ENCODE measurements at regions of chr6 and their contacts with region 1.

Region 1: DNA sequence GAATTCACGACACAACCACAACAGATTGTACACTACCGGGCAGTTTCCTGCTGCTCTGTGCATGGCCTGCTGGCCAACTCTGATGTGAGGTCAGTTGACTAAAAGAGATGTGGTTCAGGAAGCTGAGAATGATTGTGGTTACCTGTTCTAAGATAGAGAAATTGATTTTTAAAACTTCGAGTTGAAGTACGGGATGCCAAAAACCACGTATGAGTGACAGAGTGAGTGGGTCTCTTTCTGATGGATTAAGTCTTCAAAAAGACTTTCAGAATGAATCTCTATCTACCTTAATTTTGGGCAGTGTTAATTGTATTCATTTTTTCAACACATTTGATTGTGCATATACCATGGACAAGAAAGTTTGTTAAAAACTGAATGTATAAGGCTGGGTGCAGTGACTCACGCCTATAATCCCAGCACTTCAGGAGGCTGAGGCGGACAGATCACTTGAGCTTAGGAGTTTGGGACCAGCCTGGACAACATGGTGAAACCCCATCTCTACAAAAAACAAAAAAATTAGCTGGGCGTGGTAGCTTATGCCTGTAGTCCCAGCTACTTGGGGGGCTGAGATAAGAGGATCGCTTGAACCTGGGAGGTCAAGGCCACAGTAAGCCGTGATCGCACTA is 121.2 kb downstream of the SGK1 start:
- DNase-seq: no peak
- ATAC-seq: no peak
- H3K4me3 ChIP-seq: no peak overlapping the region
- H3K27ac ChIP-seq: peak overlapping the region; percentile 83
- H3K4me1 ChIP-seq: peaks cover 94% of the 10 kb centered on the region
- H3K27me3 ChIP-seq: no peaks in the 10 kb centered on the region
- CTCF ChIP-seq: no peak
- EP300 ChIP-seq: no peak
- POLR2A ChIP-seq: no peak
- RAD21 ChIP-seq: no peak

Region 2: DNA sequence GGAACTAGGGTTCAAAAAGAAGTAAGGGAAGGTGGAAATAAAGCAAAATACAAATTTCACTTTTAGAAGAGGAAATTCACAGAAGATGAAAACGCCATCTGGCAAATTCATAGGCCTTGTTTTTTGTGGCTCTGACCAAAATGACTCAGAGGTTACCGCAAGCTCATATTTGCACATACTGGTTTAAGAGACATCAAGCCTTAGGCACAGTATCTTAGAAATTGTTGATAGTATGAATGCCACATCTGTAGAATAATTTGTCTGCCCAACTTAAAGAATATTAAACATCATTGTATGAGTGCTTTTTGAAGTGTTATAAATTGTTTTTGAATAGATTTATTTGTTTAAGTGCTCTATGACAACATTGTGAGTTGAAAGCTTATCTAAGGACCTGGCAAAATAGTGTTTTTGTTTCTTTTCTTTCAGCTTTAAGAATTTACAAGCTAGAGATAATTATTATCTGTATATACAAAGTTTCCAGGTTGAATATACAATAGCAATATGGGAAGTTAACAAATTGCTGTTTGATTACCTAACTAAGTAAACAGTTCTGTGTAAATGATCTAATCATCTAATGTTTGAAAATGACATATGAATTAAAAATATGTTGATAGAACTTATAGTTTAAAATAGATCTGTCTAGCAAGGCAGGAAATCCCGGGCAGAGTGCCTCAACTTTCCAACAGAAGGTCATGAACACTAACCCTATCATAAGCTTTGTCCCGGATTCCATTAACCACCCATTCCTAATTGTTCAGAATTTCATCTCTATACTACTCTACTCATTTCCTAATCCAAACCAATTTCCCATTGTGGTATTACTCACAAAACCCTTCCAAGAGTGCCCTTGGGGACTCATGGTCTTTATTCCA is 1548.1 kb before region 1 on chr6:
- CTCF ChIA-PET with region 1: no interaction called
- POLR2A ChIA-PET with region 1: no interaction called
- in situ Hi-C with region 1: no loop called
- intact Hi-C with region 1: no loop called
- DNase-seq: no peak
- ATAC-seq: no peak
- H3K4me3 ChIP-seq: no peak overlapping the region
- H3K27ac ChIP-seq: no peak overlapping the region
- H3K4me1 ChIP-seq: no peaks in the 10 kb centered on the region
- H3K27me3 ChIP-seq: 0 out of 5 replicates have a peak, but pooled peaks cover 0 to 4% of the 10 kb centered on the region in 2 experiments
- CTCF ChIP-seq: no peak
- EP300 ChIP-seq: no peak
- POLR2A ChIP-seq: no peak
- RAD21 ChIP-seq: no peak

Region 3: GRCh38 chr6:133952815-133953633 is 243.7 kb before region 1 on chr6 and contains the start of gene TBPL1:
- CTCF ChIA-PET with region 1: no interaction called
- POLR2A ChIA-PET with region 1: no interaction called
- in situ Hi-C with region 1: no loop called
- intact Hi-C with region 1: loop called (anchors 5 kb)
- DNase-seq: peak; percentile 91
- ATAC-seq: peak; percentile 97
- H3K4me3 ChIP-seq: peak within 1 kb of the TSS; percentile 79 to 89 (median 83)
- H3K27ac ChIP-seq: peak within 1 kb of the TSS; percentile 56
- H3K4me1 ChIP-seq: peaks cover 24% of the 10 kb centered on the region
- H3K27me3 ChIP-seq: no peaks in the 10 kb centered on the region; a peak in 1 of 5 replicates
- CTCF ChIP-seq: peak; percentile 16; the same call in 1 of the 2 replicates
- EP300 ChIP-seq: no peak
- POLR2A ChIP-seq: peak; percentile 86 to 88
- RAD21 ChIP-seq: peak; percentile 22; the same call in 1 of the 2 replicates
- total RNA-seq, gene TBPL1: 39.3 and 47.7 TPM in 2 replicates

Region 4: GRCh38 chr6:134002821-134003220 is 193.9 kb before region 1 on chr6:
- CTCF ChIA-PET with region 1: no interaction called
- POLR2A ChIA-PET with region 1: no interaction called
- in situ Hi-C with region 1: no loop called
- intact Hi-C with region 1: no loop called
- DNase-seq: no peak
- ATAC-seq: no peak
- H3K4me3 ChIP-seq: no peak overlapping the region
- H3K27ac ChIP-seq: no peak overlapping the region
- H3K4me1 ChIP-seq: no peaks in the 10 kb centered on the region
- H3K27me3 ChIP-seq: no peaks in the 10 kb centered on the region; a peak in 2 of 5 replicates
- CTCF ChIP-seq: no peak
- EP300 ChIP-seq: no peak
- POLR2A ChIP-seq: no peak
- RAD21 ChIP-seq: no peak

Region 5: DNA sequence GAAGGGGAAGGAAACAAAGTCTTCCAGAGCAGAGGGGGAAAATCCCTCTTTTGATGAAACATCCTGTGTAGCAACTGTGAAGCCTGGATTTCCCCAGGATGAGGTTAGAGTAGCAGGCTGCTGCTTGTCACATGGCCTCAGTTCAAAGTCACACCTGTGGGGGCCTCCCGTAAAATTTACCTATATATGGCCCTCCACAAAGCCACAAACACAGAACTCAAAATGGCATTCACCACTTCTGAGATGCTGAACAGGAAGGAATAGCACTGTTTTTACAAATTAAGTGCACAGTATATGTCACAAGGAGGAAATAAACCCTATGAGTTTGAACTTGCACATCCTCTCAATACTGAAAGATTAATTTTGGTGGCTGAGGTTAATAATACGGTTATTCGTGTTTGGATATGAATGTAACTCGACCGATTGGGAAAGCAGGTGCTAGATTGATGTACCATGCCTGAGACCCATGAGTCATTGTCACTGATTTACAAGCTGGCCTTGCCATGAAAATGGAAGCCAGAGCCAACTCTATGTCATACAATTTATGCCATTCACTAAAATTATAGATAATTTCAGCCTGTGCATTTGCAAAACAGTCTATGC is 50.7 kb after region 1 on chr6:
- CTCF ChIA-PET with region 1: no interaction called
- POLR2A ChIA-PET with region 1: interaction called, 62 read pairs
- in situ Hi-C with region 1: loop called (anchors 5 kb)
- intact Hi-C with region 1: loop called (anchors 1 kb)
- DNase-seq: no peak
- ATAC-seq: no peak
- H3K4me3 ChIP-seq: no peak overlapping the region
- H3K27ac ChIP-seq: no peak overlapping the region
- H3K4me1 ChIP-seq: peaks cover 59% of the 10 kb centered on the region
- H3K27me3 ChIP-seq: no peaks in the 10 kb centered on the region
- CTCF ChIP-seq: no peak
- EP300 ChIP-seq: 0 out of 4 replicates have a peak, but pooled peaks of 1 of the 2 experiments have one; percentile 32
- POLR2A ChIP-seq: no peak
- RAD21 ChIP-seq: no peak

Region 6: DNA sequence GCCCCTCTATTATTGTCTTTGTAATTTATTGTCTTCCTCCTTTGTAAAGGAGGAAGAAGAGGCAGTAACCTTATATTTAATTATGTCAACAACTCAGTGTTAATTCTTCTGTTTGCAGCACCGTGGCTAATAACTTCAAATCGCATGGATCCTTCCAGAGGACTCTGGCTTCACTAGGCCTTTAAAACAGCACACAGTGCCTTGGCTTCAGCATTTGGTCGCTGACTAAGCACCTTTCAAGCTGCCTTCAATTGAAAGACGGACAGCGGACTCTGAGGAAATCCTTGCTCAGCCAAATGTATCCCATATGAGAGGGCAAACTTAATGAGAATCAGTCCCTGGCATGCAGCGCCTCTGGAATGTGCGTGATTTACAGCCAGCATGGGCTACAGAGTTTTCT is 57.0 kb after region 1 on chr6:
- CTCF ChIA-PET with region 1: no interaction called
- POLR2A ChIA-PET with region 1: interaction called, 62 read pairs
- in situ Hi-C with region 1: loop called (anchors 5 kb)
- intact Hi-C with region 1: loop called (anchors 1 kb)
- DNase-seq: peak; percentile 41
- ATAC-seq: no peak
- H3K4me3 ChIP-seq: no peak overlapping the region
- H3K27ac ChIP-seq: peak overlapping the region; percentile 39
- H3K4me1 ChIP-seq: peaks cover 66% of the 10 kb centered on the region
- H3K27me3 ChIP-seq: no peaks in the 10 kb centered on the region
- CTCF ChIP-seq: no peak
- EP300 ChIP-seq: no peak
- POLR2A ChIP-seq: no peak
- RAD21 ChIP-seq: no peak

Measured in HepG2 (cell line).